ENCODE measurements at regions of chr5 and their contacts with region 1.

Region 1: DNA sequence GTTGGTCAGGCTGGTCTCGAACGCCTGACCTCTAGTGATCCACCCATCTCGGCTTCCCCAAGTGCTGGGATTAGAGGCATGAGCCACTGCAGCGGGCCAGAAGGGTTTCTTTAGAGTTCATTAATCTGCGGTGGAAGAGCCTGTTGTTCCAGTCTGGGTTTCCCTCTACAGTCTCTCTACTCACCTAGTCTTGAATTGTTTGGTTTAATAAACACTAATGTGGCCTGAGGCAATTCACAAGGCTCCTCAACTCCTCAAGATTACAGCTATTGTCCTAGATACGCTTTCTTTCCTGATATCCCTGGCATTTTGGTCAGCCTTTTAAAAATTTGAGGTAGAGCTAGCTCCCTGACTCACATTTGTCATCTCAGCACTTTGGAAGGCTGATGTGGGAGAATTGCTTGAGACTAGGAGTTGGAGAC is 4.5 kb upstream of the SAR1B start:
- DNase-seq: no peak
- ATAC-seq: no peak
- H3K4me3 Mint-ChIP-seq: no peak overlapping the region
- H3K27ac Mint-ChIP-seq: no peak overlapping the region
- H3K4me1 Mint-ChIP-seq: peaks cover 6% of the 10 kb centered on the region
- H3K27me3 Mint-ChIP-seq: no peaks in the 10 kb centered on the region

Region 2: DNA sequence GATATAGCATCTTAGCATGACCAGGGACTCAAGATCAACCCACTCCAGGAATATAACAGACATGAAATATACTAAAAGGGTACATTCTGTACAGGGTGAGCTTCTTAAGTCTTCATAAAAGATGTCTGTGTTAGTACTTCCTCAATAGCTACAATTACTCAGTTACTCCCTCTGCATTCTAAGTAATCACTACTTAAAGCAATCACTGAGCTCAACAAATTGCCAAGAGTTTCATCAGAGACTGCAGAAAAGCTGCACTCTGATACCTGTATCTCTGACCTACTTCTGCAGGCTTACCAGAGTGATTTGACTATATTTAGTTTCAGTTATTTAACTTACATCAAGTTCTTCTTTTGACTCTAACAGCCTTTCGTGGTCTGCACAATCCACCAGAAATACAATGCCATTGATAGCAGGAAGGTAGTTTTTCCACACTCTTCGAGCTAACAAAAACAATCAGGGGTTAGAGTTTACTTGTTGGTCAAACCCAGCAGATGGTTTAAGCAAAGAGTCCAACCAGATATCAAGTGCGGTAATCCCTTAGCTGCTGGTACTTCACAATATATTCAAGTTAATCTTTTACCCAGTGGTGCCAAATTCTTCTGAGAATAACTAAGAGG is 27.8 kb before region 1 on chr5:
- CTCF ChIA-PET with region 1: interaction called, 4 read pairs
- POLR2A ChIA-PET with region 1: interaction called, 12 read pairs
- intact Hi-C with region 1: loop called in 1 of 2 experiments (anchors 1 kb)
- DNase-seq: peak; percentile 29
- ATAC-seq: peak; percentile 75
- H3K4me3 Mint-ChIP-seq: peak overlapping the region; percentile 13
- H3K27ac Mint-ChIP-seq: peak overlapping the region; percentile 94
- H3K4me1 Mint-ChIP-seq: peaks cover 42% of the 10 kb centered on the region
- H3K27me3 Mint-ChIP-seq: no peaks in the 10 kb centered on the region